ENCODE measurements at regions of chr1 and their contacts with region 1.

Region 1: GRCh38 chr1:8878448-8879347 is at the start of gene ENO1:
- DNase-seq: peak; percentile 96 to 100 (median 99)
- ATAC-seq: peak; percentile 80
- H3K4me3 ChIP-seq: peak within 1 kb of the TSS; percentile 90 to 94
- H3K4me3 Mint-ChIP-seq: peak within 1 kb of the TSS; percentile 92
- H3K27ac ChIP-seq: peak within 1 kb of the TSS; percentile 80 to 99
- H3K27ac Mint-ChIP-seq: peak within 1 kb of the TSS; percentile 98
- H3K4me1 ChIP-seq: peaks cover 43% of the 10 kb centered on the region
- H3K4me1 Mint-ChIP-seq: peaks cover 47% of the 10 kb centered on the region
- H3K27me3 ChIP-seq: no peaks in the 10 kb centered on the region
- H3K27me3 Mint-ChIP-seq: no peaks in the 10 kb centered on the region
- CTCF ChIP-seq: no peak
- total RNA-seq, gene ENO1: 130 to 136 TPM

Region 2: GRCh38 chr1:8817406-8818324 is 61.0 kb before region 1 on chr1 and contains the start of gene RERE:
- CTCF ChIA-PET with region 1: no interaction called
- POLR2A ChIA-PET with region 1: interaction called, 6 read pairs
- intact Hi-C with region 1: loop called (anchors 1 to 2 kb)
- DNase-seq: peak; percentile 91 to 99 (median 97)
- ATAC-seq: peak; percentile 96
- H3K4me3 ChIP-seq: peak within 1 kb of the TSS; percentile 84 to 98
- H3K4me3 Mint-ChIP-seq: peak within 1 kb of the TSS; percentile 92
- H3K27ac ChIP-seq: peak within 1 kb of the TSS; percentile 85 to 90
- H3K27ac Mint-ChIP-seq: peak within 1 kb of the TSS; percentile 90
- H3K4me1 ChIP-seq: peaks cover 24% of the 10 kb centered on the region
- H3K4me1 Mint-ChIP-seq: peaks cover 41% of the 10 kb centered on the region
- H3K27me3 ChIP-seq: no peaks in the 10 kb centered on the region
- H3K27me3 Mint-ChIP-seq: no peaks in the 10 kb centered on the region
- CTCF ChIP-seq: no peak
- total RNA-seq, gene RERE: 62.8 to 68.4 TPM

Region 3: DNA sequence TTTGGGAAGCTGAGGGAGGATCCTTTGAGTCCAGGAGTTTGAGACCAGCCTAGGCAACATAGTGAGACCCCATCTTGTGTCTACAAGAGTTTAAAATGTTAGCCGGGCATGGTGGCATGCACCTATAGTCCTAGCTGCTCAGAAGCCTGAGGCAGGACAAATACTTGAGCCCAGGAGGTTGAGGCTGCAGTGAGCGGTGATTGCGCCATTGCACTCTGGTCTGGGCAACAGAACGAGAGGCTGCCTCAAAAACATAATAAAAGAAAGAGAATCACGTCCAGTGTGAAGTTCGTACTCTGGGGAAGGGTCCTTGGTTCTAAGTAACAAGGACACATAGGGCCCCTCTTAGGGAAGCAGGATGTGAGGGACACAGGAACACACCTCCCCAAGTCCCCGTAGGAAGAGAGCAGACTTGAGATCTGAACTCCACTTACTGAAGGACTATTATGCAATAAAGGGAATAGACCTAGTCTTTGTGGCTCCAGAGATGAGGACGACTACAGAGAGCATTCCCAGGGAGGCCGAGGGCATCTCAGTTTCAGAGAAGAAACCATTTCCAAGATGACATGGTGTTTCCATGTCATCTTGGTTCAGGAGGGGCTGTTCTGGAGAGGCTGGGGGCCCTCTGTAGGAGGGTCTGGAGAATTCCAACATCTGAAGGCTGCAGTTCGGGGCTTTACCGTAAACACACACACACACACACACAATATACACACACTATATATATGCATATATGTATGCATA is 10.6 kb after region 1 on chr1:
- CTCF ChIA-PET with region 1: no interaction called
- POLR2A ChIA-PET with region 1: interaction called, 13 read pairs
- intact Hi-C with region 1: no loop called
- DNase-seq: no peak
- ATAC-seq: no peak
- H3K4me3 ChIP-seq: no peak overlapping the region
- H3K4me3 Mint-ChIP-seq: no peak overlapping the region
- H3K27ac ChIP-seq: no peak overlapping the region
- H3K27ac Mint-ChIP-seq: no peak overlapping the region
- H3K4me1 ChIP-seq: no peaks in the 10 kb centered on the region
- H3K4me1 Mint-ChIP-seq: no peaks in the 10 kb centered on the region
- H3K27me3 ChIP-seq: no peaks in the 10 kb centered on the region
- H3K27me3 Mint-ChIP-seq: no peaks in the 10 kb centered on the region
- CTCF ChIP-seq: no peak

Region 4: DNA sequence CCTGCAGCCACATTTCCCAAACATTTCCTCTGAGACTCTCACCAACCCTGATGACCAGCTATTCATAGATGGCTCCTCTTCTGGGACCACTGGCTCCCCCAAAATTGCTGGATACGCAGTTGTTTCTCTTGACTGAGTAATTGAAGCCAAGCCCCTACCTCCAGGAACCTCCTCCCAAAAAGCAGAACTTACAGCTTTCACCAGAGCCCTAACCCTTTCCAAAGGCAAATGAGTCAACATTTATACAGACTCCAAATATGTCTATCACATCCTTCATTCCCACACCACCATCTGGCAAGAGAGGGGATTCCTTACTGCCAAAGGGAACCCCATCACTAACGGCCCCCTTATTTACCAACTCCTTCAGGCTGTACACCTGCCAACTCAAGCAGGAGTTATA is 46.7 kb after region 1 on chr1:
- CTCF ChIA-PET with region 1: interaction called, 3 read pairs
- POLR2A ChIA-PET with region 1: interaction called, 8 read pairs
- intact Hi-C with region 1: loop called in 1 of 2 experiments (anchors 2 kb)
- DNase-seq: no peak
- ATAC-seq: no peak
- H3K4me3 ChIP-seq: peak overlapping the region; percentile 57 to 77
- H3K4me3 Mint-ChIP-seq: no peak overlapping the region
- H3K27ac ChIP-seq: peak overlapping the region; percentile 37 to 78
- H3K27ac Mint-ChIP-seq: no peak overlapping the region
- H3K4me1 ChIP-seq: peaks cover 26% of the 10 kb centered on the region
- H3K4me1 Mint-ChIP-seq: peaks cover 30% of the 10 kb centered on the region
- H3K27me3 ChIP-seq: no peaks in the 10 kb centered on the region
- H3K27me3 Mint-ChIP-seq: no peaks in the 10 kb centered on the region
- CTCF ChIP-seq: no peak

Region 5: DNA sequence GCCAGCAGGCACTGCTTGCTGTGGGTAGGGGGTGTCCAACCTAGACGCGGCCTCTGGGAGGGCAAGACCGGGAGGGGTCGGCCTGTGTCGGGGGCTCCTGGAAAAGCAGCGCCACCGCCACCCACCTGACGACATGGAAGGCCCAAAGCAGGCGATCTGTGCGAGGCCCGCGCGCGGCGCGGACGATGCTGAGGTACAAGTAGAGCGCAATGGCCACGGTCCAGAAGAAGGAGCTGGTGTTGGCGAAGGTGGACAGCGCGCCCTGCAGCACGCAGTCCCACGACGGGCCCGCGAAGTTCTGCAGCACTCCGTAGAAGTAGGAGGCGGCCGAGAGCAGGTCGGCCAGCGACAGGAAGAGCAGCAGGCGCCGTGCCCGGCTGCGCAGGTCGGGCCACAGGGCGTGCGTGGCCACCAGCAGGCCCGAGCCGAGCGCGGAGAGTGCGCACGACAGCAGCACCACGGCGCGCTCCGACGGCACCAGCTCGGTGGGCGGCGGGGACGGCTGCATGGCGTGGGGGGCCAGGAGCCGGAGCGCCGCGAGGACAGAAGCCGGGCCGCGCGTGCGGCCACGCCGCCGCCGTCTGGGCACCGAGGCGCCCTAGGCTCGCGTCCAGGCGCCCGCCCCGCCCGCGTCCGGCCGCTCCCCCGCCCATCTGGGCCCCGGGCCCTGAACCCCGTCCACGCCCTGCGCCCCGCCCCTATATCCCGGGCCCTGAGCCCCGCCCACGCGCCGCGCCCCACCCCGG is 250.0 kb after region 1 on chr1 and contains the start of gene GPR157:
- CTCF ChIA-PET with region 1: no interaction called
- POLR2A ChIA-PET with region 1: no interaction called
- intact Hi-C with region 1: loop called (anchors 1 to 2 kb)
- DNase-seq: peak; percentile 56 to 88 (median 81)
- ATAC-seq: peak; percentile 84
- H3K4me3 ChIP-seq: peak within 1 kb of the TSS; percentile 61 to 68
- H3K4me3 Mint-ChIP-seq: peak within 1 kb of the TSS; percentile 90
- H3K27ac ChIP-seq: peak within 1 kb of the TSS; percentile 37 to 50
- H3K27ac Mint-ChIP-seq: peak within 1 kb of the TSS; percentile 75
- H3K4me1 ChIP-seq: peaks cover 33% of the 10 kb centered on the region
- H3K4me1 Mint-ChIP-seq: peaks cover 35% of the 10 kb centered on the region
- H3K27me3 ChIP-seq: no peaks in the 10 kb centered on the region
- H3K27me3 Mint-ChIP-seq: no peaks in the 10 kb centered on the region
- CTCF ChIP-seq: no peak
- total RNA-seq, gene GPR157: 1.9 to 2.9 TPM

Measured in CD8-positive, alpha-beta T cell (primary cell).